Activated CD4-positive, alpha-beta T cell treated with anti-CD3 and anti-CD28 coated beads for 36 hours (primary cell): ENCODE measurements at regions of chr12 and their contacts with region 1.

Region 1: DNA sequence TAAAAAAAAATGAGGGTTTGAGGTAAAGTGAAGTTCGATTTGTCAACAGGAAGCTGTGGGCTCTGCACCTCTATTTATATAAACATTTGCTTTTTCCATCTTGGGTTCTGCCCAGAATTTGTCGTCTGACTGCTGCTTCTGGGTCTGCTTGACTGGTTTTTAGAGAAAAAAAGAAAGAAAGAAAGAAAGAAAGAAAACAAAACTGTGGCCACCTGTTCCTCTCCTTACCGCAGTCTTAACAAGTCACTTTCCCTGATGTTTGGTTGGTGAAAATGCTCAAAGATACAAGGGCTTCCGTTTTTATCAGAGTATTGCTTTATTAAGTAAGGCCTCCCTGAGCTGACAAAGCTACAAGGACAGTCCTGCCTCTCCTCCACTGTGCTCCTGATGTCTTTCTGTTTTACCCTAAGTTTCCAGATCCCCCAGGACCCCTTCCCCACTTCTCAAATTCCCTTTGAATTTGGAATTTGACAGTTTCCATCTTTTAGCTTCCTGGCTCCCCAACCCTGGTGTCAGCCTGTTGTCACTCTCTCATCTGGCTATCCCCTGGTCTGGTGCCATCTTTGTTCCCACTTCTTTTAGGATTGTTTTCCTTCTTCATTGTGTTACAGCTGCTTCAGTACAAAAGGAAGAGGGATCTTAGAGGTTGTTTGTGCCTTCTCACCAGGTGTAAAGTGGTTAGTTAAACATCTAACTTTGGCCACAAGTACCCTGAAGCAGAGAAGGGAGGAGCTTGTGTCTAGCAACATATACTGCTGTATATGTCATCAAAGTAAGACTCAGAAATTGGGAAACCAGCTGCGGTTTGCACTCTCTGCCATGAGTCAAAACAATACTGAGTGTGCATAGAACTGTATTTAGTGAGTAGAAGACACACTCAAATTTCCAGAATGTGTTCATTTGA is 18.0 kb downstream of the MFAP5 start:
- DNase-seq: peak; percentile 80
- ATAC-seq: peak; percentile 89
- H3K4me3 Mint-ChIP-seq: peak overlapping the region; percentile 1
- H3K27ac Mint-ChIP-seq: peak overlapping the region; percentile 80
- H3K4me1 Mint-ChIP-seq: peaks cover 45% of the 10 kb centered on the region
- H3K27me3 Mint-ChIP-seq: peaks cover 6% of the 10 kb centered on the region

Region 2: DNA sequence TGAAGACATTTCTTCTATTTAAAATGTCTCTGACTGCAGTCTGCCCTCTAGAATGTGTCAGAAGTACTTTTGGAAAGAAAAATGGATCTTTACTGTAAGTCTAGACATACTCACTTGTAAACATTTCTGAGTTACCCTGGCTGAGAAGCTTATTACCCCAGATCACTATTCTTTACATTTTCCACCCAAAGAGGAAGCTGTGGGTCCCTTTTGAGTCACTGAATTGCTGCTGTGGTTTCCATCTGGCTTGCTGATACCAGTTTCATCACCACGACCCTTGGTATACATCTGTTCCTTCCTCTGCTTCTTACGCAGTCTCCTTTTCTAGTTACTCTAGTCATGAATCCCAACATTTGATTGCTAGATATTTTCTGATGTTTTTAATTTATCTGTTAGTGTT is 151.5 kb before region 1 on chr12:
- CTCF ChIA-PET with region 1: interaction called, 3 read pairs
- POLR2A ChIA-PET with region 1: no interaction called
- intact Hi-C with region 1: loop called (anchors 1 kb)
- DNase-seq: peak; percentile 71
- ATAC-seq: peak; percentile 93
- H3K4me3 Mint-ChIP-seq: no peak overlapping the region
- H3K27ac Mint-ChIP-seq: peak overlapping the region; percentile 51
- H3K4me1 Mint-ChIP-seq: peaks cover 24% of the 10 kb centered on the region
- H3K27me3 Mint-ChIP-seq: peaks cover 13% of the 10 kb centered on the region

Region 3: DNA sequence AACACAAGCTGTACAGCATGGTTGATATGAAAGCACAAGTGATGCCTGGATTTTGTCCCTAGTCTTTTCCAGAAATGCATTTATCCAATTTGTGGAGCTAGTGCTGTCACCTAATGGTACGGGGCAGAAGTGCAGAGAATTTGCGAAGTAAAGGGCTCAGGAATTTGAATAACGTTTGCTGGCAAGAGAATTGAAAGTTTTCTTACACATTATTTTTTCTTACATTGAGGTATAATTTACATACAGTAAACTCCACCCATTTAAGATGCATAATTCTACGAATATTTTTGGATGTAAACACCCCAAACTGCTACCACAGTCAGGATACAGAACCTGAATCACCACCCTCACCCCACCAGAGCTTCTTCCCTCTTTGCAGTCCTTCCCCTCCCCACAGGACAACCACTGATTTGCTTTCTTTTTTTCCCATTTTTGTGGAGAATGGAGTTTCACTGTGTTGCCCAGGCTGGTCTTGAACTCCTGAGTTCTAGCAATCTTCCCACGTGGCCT is 35.5 kb before region 1 on chr12:
- CTCF ChIA-PET with region 1: interaction called, 10 read pairs
- POLR2A ChIA-PET with region 1: interaction called, 4 read pairs
- intact Hi-C with region 1: no loop called
- DNase-seq: peak; percentile 18
- ATAC-seq: no peak
- H3K4me3 Mint-ChIP-seq: no peak overlapping the region
- H3K27ac Mint-ChIP-seq: no peak overlapping the region
- H3K4me1 Mint-ChIP-seq: peaks cover 11% of the 10 kb centered on the region
- H3K27me3 Mint-ChIP-seq: peaks cover 15% of the 10 kb centered on the region

Region 4: DNA sequence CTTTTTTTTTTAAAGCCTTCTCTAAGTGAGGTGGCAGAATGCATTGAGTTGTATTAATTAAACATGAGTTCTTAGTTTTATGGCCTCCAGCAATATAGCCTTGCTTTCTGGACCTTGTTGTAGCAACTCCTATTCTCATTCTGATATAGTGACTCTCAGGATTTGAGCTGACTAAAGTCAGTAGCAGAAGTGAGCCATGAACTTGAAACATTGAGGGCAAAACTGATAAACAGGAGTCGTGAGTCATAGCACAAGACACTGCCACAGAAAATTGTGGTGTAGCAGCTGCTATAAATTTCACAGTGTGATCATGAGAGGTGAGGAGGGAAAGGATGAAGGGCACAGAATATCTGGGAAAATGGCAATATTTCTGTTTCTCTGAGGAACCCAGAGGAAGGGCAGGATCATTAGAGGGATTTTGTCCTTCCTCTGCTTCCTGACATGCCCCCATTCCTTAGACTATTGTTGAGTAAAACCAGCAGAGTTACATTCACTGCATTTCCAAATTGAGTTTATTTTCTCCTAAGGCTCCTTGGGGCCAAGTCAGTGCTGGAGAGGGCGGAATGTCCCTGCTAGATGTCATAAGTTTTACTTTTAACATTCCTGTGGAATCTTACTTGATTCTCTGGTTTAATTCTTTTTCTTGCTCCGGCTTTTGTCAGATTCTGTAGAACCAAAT is 352.2 kb after region 1 on chr12:
- CTCF ChIA-PET with region 1: interaction called, 4 read pairs
- POLR2A ChIA-PET with region 1: no interaction called
- intact Hi-C with region 1: loop called in 1 of 2 experiments (anchors 2 kb)
- DNase-seq: peak; percentile 52
- ATAC-seq: peak; percentile 93
- H3K4me3 Mint-ChIP-seq: no peak overlapping the region
- H3K27ac Mint-ChIP-seq: no peak overlapping the region
- H3K4me1 Mint-ChIP-seq: peaks cover 62% of the 10 kb centered on the region
- H3K27me3 Mint-ChIP-seq: peaks cover 9% of the 10 kb centered on the region

Region 5: GRCh38 chr12:9027161-9028059 is 382.8 kb after region 1 on chr12:
- CTCF ChIA-PET with region 1: interaction called, 3 read pairs
- POLR2A ChIA-PET with region 1: no interaction called
- intact Hi-C with region 1: loop called (anchors 2 to 5 kb)
- DNase-seq: peak; percentile 63
- ATAC-seq: no peak
- H3K4me3 Mint-ChIP-seq: peak overlapping the region; percentile 36
- H3K27ac Mint-ChIP-seq: peak overlapping the region; percentile 79
- H3K4me1 Mint-ChIP-seq: peaks cover 52% of the 10 kb centered on the region
- H3K27me3 Mint-ChIP-seq: no peaks in the 10 kb centered on the region

Region 6: GRCh38 chr12:9364224-9365176 is 719.9 kb after region 1 on chr12:
- CTCF ChIA-PET with region 1: no interaction called
- POLR2A ChIA-PET with region 1: no interaction called
- intact Hi-C with region 1: loop called in 1 of 2 experiments (anchors 2 kb)
- DNase-seq: peak; percentile 71
- ATAC-seq: peak; percentile 87
- H3K4me3 Mint-ChIP-seq: peak overlapping the region; percentile 9
- H3K27ac Mint-ChIP-seq: peak overlapping the region; percentile 17
- H3K4me1 Mint-ChIP-seq: peaks cover 37% of the 10 kb centered on the region
- H3K27me3 Mint-ChIP-seq: peaks cover 7% of the 10 kb centered on the region